Gastrocnemius medialis (tissue), 4 donors: ENCODE measurements at regions of chr20 and their contacts with region 1.

Region 1: GRCh38 chr20:58790454-58790853 is 60.2 kb downstream of the GNAS-AS1 start:
- DNase-seq: no peak
- ATAC-seq: no peak
- H3K4me3 ChIP-seq: no peak overlapping the region
- H3K27ac ChIP-seq: no peak overlapping the region
- H3K4me1 ChIP-seq: no peaks in the 10 kb centered on the region
- H3K27me3 ChIP-seq: peaks cover 0 to 7% (median 0%) of the 10 kb centered on the region in 3 donors
- CTCF ChIP-seq: no peak
- POLR2A ChIP-seq: no peak

Region 2: DNA sequence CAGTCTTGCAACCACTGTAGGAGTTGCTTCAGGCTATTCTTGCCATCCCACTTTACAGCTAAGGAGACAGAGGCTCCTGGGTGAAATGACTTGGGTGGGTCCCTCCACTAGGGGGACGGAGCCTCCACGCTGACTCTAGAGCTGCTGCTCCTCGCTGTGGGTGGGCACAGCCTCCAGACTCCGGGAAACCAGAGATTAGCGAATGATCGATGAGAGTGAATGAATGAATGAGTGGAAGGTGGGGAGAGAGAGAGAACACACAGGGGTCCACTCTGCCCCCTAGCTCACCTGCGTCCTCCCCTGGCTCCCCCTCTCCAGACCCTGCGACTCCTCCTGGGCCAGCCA is 1180.6 kb before region 1 on chr20:
- in situ Hi-C with region 1: no loop called
- intact Hi-C with region 1: loop called (anchors 5 kb)
- DNase-seq: no peak
- ATAC-seq: no peak
- H3K4me3 ChIP-seq: no peak overlapping the region
- H3K27ac ChIP-seq: no peak overlapping the region
- H3K4me1 ChIP-seq: no peaks in the 10 kb centered on the region
- H3K27me3 ChIP-seq: peaks cover 0 to 8% (median 0%) of the 10 kb centered on the region in 3 donors
- CTCF ChIP-seq: no peak
- POLR2A ChIP-seq: no peak